ENCODE measurements at regions of chr13 and their contacts with region 1.

Region 1: GRCh38 chr13:33723772-33724435 is 94.0 kb upstream of the RFC3 start:
- DNase-seq: peak; percentile 87 to 89
- H3K4me3 ChIP-seq: no peak overlapping the region
- CTCF ChIP-seq: peak in 1 of 3 donors; percentile 71
- POLR2A ChIP-seq: no peak

Region 2: GRCh38 chr13:33224686-33225085 is 499.2 kb before region 1 on chr13:
- intact Hi-C with region 1: loop called (anchors 5 kb)
- DNase-seq: no peak
- H3K4me3 ChIP-seq: no peak overlapping the region
- CTCF ChIP-seq: no peak
- POLR2A ChIP-seq: no peak

Region 3: DNA sequence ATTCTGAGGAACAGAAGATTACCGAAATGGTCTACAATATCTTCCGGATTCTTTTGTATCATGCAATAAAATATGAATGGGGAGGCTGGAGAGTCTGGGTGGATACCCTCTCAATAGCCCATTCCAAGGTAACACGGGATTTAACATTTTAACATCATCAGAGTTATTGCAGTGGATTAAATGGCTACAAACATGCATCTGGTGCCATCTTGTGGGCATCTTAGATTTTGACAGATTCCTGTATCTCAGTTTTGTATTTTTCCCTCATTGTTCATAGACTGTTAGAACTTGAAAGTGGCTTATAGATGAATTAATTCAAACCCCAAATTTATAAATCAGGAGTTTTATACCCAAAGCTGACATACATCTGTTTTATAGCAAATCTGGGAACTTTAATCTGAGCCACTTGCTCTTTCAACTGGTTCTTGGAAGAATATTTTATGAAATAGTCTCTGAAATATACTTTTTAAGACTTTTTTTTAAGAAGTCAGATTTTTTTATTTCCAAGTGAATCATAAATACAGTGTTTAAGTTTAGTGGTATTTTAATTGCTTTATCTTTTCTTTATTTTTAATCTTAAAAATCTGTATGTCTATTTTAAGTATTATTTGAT is 1433.3 kb after region 1 on chr13:
- intact Hi-C with region 1: loop called (anchors 10 kb)
- DNase-seq: peak in 1 of 2 donors; percentile 31
- H3K4me3 ChIP-seq: no peak overlapping the region
- CTCF ChIP-seq: no peak
- POLR2A ChIP-seq: no peak

Measured in lower leg skin (tissue), 4 donors.